ENCODE measurements at regions of chr7 and their contacts with region 1.

Region 1: GRCh38 chr7:76179686-76180085 is 22.0 kb upstream of the SRRM3 start:
- DNase-seq: no peak

Region 2: DNA sequence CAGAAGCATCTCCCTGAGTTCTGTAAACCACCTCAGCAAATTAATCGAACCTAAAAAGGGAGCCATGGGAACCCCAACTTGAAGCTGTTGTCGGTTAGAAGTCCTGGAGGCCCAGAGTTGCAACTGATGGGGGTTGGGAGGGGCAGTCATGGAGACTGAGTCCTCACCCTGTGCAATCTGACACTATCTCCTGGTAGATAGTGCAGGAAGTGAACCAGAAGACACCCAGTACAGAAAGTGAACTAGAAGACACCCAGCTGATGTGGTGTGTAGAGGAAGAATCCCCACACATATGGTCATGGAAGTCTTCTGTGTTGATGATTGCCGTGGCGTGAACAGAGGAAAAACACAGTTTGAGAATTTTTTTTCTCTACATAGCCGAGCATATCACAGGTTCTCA is 36.8 kb before region 1 on chr7:
- intact Hi-C with region 1: no loop called
- DNase-seq: no peak

Region 3: DNA sequence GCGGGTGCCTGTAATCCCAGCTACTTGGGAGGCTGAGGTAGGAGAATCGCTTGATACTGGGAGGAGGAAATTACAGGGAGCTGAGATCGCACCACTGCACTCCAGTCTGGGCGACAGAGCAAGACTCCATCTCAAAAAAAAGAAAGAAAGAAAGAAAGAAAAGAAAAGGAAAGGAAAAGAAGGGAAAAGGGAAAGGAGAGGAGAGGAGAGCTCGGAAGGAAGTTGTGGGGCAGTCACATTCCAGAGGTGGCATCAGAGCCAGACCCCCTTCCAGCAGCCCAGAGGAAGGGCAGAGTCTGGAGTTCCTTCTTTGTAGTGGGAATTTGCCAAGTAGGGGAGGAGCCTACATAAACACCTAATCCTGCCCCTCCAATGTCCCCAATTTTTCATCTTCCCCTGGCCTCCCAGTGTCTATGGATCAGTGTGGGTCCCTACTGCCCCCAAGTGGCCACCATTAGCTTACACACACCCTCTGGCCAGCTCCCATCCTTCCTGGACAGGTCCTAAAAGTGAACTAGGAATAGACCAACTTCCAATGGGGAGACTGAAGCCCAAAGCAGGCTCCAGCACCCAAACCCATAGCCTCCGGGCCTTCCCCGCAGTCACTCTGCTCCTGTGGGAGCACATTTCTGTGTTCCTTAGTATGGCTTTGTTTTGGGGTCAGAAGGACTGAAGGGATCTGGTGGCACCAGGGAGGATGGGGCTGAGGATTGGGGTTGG is 83.2 kb after region 1 on chr7:
- intact Hi-C with region 1: loop called (anchors 2 kb)
- DNase-seq: no peak

Region 4: DNA sequence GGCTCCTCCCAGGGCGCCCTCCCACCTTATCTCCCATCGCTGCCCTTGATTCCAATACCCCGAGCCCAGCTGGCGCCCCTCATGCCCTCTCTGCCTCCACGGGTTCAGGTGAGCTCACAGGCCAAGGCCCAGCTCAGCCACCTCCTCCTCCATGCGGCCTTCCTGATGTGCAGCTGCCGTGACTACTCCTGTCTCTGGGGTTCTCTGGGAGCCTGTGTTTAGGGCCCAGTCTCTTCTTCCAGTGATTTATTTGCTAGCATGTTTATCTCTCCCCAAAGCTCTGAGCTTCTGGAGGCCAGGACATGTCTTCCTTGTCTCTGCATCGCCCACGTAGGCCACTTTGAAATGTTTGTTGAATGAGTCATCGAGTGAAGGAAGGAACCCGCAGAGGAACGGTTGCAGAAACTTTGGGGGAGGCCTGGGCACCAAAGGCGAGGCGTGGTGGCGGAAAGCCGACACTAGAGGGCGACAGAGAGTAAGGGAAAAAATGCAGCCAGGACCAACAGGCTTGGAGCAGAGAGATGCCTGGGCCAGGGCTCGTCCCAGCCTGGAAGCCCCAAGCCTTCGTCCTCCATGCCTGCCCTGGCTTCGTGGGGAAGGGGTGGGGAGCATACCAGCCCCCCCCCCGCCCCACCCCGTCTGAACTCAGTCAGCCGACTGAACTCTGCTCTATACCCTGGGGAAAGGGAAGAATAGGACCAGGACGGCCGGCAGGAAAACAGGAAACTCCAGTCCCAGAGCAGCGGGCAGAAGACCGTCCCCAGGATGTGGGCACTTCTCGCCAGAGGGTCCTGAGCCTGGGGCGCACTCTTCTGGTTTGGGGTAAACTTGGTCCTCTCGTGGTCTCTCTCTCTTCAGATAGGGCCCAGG is 111.9 kb after region 1 on chr7:
- intact Hi-C with region 1: no loop called
- DNase-seq: peak; percentile 95

Measured in cardiac septum (tissue), 1 donor.